ENCODE measurements at regions of chr22 and their contacts with region 1.

Region 1: DNA sequence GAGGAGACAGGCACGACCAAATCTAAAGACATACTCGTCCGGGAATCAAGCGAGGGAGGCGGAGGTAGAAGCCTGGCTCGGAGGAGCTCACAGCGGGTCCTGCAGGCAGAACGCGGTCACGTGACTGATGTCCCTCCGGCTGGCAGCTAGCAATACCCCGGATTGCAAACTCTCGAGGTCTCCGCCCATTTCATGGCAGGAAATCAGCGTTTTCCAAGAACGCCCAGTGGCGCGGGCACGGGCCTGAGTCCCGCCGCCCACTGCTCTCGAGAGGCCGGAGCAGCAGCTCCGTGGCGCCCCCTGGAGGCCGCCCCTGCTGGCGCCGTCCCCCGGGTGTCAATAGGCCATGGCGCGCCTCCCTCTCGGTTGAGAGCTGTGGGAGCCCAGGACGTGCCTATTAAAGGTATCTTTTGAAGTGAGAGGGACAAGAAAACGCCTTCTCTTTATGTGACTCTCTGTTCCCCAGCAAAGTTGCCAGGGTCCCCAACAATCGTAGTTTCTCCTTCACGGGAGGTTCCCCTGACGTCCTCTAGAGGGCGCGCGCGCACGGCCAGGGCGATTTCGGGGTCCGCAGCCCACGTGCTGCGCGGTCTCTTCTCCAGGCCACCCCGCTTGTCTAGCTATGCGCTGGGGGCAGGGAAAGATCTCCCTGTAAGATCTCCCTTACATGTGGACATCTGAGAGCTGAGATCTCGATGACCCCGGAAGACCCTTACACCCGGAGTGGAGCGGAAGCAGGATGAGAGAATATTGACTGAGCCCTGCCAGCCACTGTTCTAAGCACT is 37.3 kb upstream of the RBFOX2 start:
- DNase-seq: peak; percentile 92 to 93
- ATAC-seq: peak; percentile 93 to 97 (median 96)
- H3K4me3 ChIP-seq: peak overlapping the region; percentile 73
- H3K27ac ChIP-seq: peak overlapping the region; percentile 85
- H3K4me1 ChIP-seq: no peaks in the 10 kb centered on the region
- H3K27me3 ChIP-seq: no peaks in the 10 kb centered on the region
- CTCF ChIP-seq: peak; percentile 100

Region 2: DNA sequence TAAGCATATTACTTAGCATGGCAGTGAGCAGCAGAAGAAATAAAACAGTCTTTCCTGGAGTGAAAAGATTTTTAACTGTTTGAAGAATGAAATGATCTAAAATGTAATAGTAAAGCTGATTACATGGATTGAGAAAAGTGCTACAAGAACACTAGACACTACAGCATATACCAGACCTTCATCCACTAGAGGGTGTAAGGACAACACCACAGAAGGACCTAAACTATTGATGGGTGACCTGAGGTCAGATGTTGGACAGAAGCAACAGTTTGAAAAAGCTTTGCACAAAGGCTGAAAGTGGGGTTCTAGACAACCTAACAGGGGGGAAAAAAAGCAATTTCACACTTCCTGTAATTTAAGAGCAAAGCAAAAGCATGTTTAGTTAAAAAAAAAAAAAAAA is 135.0 kb before region 1 on chr22:
- intact Hi-C with region 1: loop called (anchors 2 to 5 kb)
- DNase-seq: no peak
- ATAC-seq: peak; percentile 90 to 96 (median 93)
- H3K4me3 ChIP-seq: no peak overlapping the region
- H3K27ac ChIP-seq: no peak overlapping the region
- H3K4me1 ChIP-seq: no peaks in the 10 kb centered on the region
- H3K27me3 ChIP-seq: no peaks in the 10 kb centered on the region
- CTCF ChIP-seq: peak; percentile 75

Region 3: GRCh38 chr22:35961480-35962295 is 104.3 kb before region 1 on chr22:
- intact Hi-C with region 1: no loop called
- DNase-seq: peak in 1 of 2 donors; percentile 19
- ATAC-seq: peak in 3 of 4 donors; percentile 50 to 79 (median 72)
- H3K4me3 ChIP-seq: no peak overlapping the region
- H3K27ac ChIP-seq: peak overlapping the region; percentile 11
- H3K4me1 ChIP-seq: peaks cover 33% of the 10 kb centered on the region
- H3K27me3 ChIP-seq: no peaks in the 10 kb centered on the region
- CTCF ChIP-seq: no peak

Region 4: DNA sequence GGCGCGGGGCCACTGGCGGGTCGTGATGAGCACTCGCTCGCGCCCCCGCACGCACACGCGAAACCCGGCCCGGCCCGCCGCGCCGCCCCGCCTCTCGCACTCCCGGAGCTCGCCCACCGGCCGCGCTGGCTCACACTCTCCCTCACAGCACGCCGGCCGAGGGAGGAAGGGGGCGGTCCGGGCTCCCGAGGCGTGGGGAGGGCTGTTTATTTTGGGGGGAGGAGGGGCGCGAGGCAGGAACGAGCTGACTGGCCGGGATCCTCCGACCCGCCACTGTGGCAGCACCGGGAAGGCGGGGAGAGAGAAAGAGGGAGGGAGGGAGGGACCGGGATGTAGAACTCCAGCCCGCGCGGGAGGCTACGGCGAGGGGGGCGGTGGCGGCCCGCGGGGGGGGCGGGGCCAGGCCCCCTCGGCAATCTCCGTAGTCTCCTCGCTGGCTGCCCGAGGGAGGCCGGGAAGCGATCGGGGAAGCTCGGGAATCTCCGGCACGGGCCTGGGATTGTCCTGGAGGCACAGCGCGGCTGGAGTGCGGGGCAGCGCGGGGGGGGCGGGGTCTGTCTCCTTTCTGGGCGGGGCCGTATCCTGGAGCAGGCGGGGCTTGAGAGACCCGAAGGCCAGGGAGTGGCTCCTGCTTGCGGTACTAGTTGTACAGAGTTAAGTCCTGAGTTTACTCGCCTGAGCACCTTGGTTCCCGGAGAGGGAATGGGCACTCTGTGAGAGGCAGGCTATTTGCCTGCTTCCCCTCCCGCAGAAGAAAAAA is 37.1 kb before region 1 on chr22 and contains the start of gene RBFOX2:
- intact Hi-C with region 1: loop called (anchors 2 to 5 kb)
- DNase-seq: peak; percentile 98 to 99
- ATAC-seq: peak; percentile 95 to 96 (median 96)
- H3K4me3 ChIP-seq: peak within 1 kb of the TSS; percentile 87
- H3K27ac ChIP-seq: peak within 1 kb of the TSS; percentile 87
- H3K4me1 ChIP-seq: peaks cover 11% of the 10 kb centered on the region
- H3K27me3 ChIP-seq: no peaks in the 10 kb centered on the region
- CTCF ChIP-seq: no peak
- total RNA-seq, gene RBFOX2: 28.4 to 50.4 (median 36.8) TPM

Region 5: GRCh38 chr22:36191106-36191836 is 125.3 kb after region 1 on chr22:
- intact Hi-C with region 1: no loop called
- DNase-seq: peak; percentile 75 to 92
- ATAC-seq: peak; percentile 94 to 98 (median 97)
- H3K4me3 ChIP-seq: no peak overlapping the region
- H3K27ac ChIP-seq: peak overlapping the region; percentile 79
- H3K4me1 ChIP-seq: peaks cover 12% of the 10 kb centered on the region
- H3K27me3 ChIP-seq: no peaks in the 10 kb centered on the region
- CTCF ChIP-seq: no peak